ENCODE measurements at regions of chr10 and their contacts with region 1.

Region 1: DNA sequence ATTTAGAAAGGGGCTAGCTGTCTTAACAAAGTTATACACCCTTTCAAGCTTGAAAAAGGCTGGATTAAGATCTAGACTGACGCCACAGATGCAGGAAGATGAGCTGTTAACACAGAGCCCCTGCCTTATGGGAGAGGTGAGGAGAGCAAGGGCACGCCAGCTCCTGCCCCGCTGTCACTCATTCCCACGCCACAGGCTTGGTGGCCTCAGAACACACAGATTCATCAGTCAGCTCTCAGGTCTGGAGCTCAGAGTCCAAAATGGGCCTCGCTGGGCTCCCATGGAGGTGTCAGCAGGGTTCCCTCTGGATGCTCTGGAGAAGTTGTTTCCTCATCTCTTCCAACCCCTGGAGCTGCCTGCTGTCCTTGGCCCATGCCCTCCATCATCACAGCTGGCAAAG is 554.2 kb downstream of the TCERG1L start:
- DNase-seq: peak; percentile 85
- H3K4me3 ChIP-seq: no peak overlapping the region
- H3K27ac ChIP-seq: peak overlapping the region; percentile 98
- H3K4me1 ChIP-seq: peaks cover 24% of the 10 kb centered on the region
- H3K27me3 ChIP-seq: no peaks in the 10 kb centered on the region
- CTCF ChIP-seq: no peak

Region 2: GRCh38 chr10:130547368-130547767 is 209.9 kb before region 1 on chr10:
- CTCF ChIA-PET with region 1: no interaction called
- POLR2A ChIA-PET with region 1: no interaction called
- intact Hi-C with region 1: loop called (anchors 5 kb)
- DNase-seq: peak; percentile 42
- H3K4me3 ChIP-seq: no peak overlapping the region
- H3K27ac ChIP-seq: no peak overlapping the region
- H3K4me1 ChIP-seq: peaks cover 13% of the 10 kb centered on the region
- H3K27me3 ChIP-seq: no peaks in the 10 kb centered on the region
- CTCF ChIP-seq: peak; percentile 46

Region 3: GRCh38 chr10:131049016-131049415 is 291.7 kb after region 1 on chr10:
- CTCF ChIA-PET with region 1: no interaction called
- POLR2A ChIA-PET with region 1: no interaction called
- intact Hi-C with region 1: loop called (anchors 2 kb)
- DNase-seq: peak; percentile 98
- H3K4me3 ChIP-seq: no peak overlapping the region
- H3K27ac ChIP-seq: peak overlapping the region; percentile 50
- H3K4me1 ChIP-seq: peaks cover 47% of the 10 kb centered on the region
- H3K27me3 ChIP-seq: no peaks in the 10 kb centered on the region
- CTCF ChIP-seq: no peak

Region 4: DNA sequence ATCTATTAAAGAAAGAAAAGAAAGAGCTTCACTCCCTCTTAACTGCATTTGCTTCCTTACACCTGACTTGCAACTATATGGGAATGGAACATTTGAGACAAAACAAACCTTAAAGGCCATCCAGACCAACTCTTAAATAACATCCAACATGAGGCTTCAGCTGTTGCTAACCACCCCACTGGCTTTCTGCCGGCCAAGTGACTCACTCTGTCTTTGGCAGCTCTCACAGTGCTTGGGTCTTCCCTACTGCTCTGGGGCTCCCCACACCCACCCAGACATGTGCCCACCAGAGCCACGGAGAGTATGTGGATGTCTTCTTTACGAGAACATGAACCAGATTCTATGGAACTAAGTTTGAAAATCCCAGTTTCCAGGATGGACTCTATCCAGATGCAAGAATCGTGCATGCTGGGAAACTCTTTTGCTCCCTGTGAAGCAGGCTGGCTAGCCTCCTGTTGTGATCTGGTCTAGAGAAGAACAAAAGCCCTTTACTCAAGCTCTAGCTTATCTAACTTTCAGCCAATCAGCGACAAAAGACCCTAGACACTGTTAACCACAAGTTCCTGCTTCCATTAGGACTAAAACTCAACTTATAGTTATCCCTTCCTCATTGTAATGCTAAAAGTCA is 308.5 kb after region 1 on chr10:
- CTCF ChIA-PET with region 1: no interaction called
- POLR2A ChIA-PET with region 1: no interaction called
- intact Hi-C with region 1: loop called (anchors 5 kb)
- DNase-seq: peak; percentile 89
- H3K4me3 ChIP-seq: no peak overlapping the region
- H3K27ac ChIP-seq: no peak overlapping the region
- H3K4me1 ChIP-seq: peaks cover 33% of the 10 kb centered on the region
- H3K27me3 ChIP-seq: no peaks in the 10 kb centered on the region
- CTCF ChIP-seq: no peak